ENCODE measurements at regions of chr4 and their contacts with region 1.

Region 1: GRCh38 chr4:143359644-143360193 is 23.0 kb downstream of the GAB1 start:
- DNase-seq: no peak
- ATAC-seq: no peak
- H3K4me3 ChIP-seq: no peak overlapping the region
- H3K27ac ChIP-seq: peak overlapping the region; percentile 93 to 94
- H3K4me1 ChIP-seq: peaks cover 13 to 30% of the 10 kb centered on the region in 2 donors
- H3K27me3 ChIP-seq: no peaks in the 10 kb centered on the region

Region 2: GRCh38 chr4:143406523-143406922 is 46.8 kb after region 1 on chr4:
- intact Hi-C with region 1: loop called in 1 of 2 experiments (anchors 5 kb)
- DNase-seq: peak; percentile 83 to 87
- ATAC-seq: peak; percentile 69
- H3K4me3 ChIP-seq: no peak overlapping the region
- H3K27ac ChIP-seq: peak overlapping the region in 1 of 2 donors; percentile 39
- H3K4me1 ChIP-seq: peaks cover 16 to 34% of the 10 kb centered on the region in 2 donors
- H3K27me3 ChIP-seq: no peaks in the 10 kb centered on the region